ENCODE measurements at regions of chr11 and their contacts with region 1.

Region 1: DNA sequence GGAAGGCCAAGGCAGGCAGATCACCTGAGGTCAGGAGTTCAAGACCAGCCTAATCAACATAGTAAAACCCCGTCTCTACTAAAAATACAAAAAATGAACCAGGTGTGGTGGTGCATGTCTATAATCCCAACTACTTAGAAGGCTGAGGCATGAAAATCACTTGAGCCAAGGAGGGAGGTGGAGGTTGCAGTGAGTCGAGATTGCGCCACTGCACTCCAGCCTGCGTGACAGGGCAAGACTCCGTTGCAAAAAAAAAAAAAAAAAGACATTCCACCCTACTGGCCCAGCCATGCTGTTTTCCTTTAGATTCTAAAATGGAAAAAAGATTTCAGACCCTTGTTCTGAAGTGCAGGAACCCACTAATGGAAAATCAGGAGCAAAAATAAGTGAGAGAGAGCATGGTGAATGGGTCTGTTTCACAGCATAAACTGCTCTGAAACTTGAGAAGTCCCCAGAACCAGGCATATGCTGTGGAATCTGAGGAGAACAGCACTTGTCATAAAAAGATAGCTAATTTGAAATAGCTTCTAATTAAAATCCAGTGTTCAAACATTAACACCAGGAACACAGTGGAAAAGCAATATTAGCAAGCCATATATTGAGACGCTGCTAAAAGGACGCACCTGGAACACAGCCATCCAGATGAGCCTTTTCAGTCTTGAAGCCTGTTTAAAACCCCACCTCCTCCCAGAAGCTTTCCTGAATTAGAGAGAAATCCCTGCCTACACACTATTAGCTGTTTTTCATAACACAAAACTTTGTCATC is 66.3 kb upstream of the CHRM4 start:
- DNase-seq: no peak
- H3K4me3 ChIP-seq: no peak overlapping the region
- H3K27ac ChIP-seq: no peak overlapping the region
- H3K4me1 ChIP-seq: no peaks in the 10 kb centered on the region
- H3K27me3 ChIP-seq: no peaks in the 10 kb centered on the region
- CTCF ChIP-seq: no peak
- POLR2A ChIP-seq: no peak

Region 2: DNA sequence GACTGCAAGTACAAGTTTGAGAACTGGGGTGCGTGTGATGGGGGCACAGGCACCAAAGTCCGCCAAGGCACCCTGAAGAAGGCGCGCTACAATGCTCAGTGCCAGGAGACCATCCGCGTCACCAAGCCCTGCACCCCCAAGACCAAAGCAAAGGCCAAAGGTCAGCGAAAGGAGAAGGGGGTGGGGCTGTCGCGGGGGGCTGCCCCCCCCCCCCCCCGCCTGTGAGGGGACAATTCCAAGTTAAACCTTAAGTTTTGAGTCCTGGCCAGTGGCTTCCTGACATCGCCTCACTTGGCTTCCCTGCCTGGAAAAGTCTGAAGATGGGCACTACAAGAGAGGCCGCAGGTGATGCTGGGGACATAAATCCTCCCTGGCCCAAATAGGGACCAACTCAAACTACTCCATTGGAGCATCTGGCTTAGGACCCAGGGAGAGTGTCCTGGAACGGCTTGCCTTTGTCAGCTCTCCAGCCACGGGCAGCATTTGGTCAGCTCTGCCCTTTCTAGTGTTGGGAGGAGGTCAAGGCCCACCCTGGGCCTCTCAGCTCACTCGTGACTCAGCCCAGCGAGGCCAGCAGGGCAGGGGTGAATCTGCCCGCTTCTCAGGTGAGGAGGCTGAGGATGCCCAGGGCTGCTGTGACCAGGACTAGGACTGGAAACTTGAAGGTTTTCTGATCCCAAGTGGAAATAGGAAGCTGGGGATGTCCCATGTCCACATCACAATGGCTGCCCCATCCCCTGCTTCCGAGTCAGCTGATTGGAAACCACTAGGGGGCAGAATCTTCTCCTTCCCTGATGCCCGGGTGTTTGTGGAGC is 75.0 kb before region 1 on chr11:
- intact Hi-C with region 1: loop called (anchors 2 kb)
- DNase-seq: no peak
- H3K4me3 ChIP-seq: peak overlapping the region in 2 of 3 donors; percentile 75 to 81
- H3K27ac ChIP-seq: no peak overlapping the region
- H3K4me1 ChIP-seq: peaks cover 0 to 5% of the 10 kb centered on the region in 2 donors
- H3K27me3 ChIP-seq: peaks cover 3 to 5% of the 10 kb centered on the region in 2 donors
- CTCF ChIP-seq: peak in 1 of 3 donors; percentile 35
- POLR2A ChIP-seq: no peak

Measured in breast epithelium (tissue), 4 donors.